Activated T-helper 1 cell treated with anti-CD3 and anti-CD28 coated beads, Interleukin-12 subunit alpha, Interleukin-12 subunit beta, Interleukin-2, Interleukin-4 antibody, amounts not matched to agents 30 ng/mL and 10 ng/mL and 1 ng/mL, durations not matched to agents 14 hours and 24 hours and 36 hours (primary cell): ENCODE measurements at regions of chr2 and their contacts with region 1.

Region 1: DNA sequence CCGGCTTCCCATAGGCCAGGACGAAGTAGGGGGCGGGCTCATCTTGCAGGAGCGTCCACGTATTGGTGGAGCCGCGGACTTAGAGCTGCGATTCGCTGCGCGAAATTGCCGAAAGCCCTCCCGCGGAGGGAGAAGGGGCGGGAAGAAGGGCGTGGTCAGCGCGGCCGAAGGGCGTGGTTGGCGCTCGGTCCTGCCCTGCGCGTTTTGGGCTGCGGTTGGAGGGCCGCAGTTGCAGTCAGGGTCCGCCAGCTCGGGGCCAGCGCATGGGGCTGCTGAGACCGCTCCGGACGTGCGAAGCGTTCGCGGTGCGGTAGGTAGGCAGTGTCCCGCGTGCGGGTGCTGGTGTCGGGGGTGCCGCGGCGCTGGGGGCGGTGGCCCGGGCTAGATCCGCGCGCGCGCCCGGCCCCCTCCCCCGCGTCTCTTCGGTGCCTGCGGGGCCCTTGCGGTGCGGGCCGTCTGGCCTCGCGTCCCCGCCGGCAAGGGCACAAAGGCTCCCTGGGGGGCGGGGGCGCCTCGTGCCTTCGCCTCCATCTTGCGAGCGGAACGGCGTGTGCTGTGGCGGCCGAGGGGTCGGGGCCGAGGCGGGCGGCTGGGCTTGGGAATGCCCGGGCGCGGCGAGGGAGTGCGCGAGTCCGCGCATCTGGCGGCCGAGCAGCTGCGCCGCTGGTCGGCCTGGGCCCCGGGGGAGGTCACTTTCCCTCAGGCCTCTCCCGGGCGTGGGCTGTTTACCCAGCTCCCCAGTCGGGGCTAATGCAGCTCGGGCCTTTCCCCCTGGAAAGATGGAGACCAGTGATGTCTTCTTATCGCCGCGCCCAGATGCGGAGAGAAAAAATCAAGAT is at the start of gene CEP68:
- DNase-seq: peak; percentile 96
- H3K4me3 Mint-ChIP-seq: peak within 1 kb of the TSS; percentile 94
- H3K27ac Mint-ChIP-seq: peak within 1 kb of the TSS; percentile 84
- H3K4me1 Mint-ChIP-seq: peaks cover 48% of the 10 kb centered on the region
- H3K27me3 Mint-ChIP-seq: peaks cover 6% of the 10 kb centered on the region
- total RNA-seq, gene CEP68: 4.0 and 5.5 TPM in 2 replicates

Region 2: GRCh38 chr2:63841254-63842022 is 1215.0 kb before region 1 on chr2 and contains the start of gene UGP2:
- intact Hi-C with region 1: loop called (anchors 2 kb)
- DNase-seq: peak; percentile 83
- H3K4me3 Mint-ChIP-seq: peak within 1 kb of the TSS; percentile 99
- H3K27ac Mint-ChIP-seq: peak within 1 kb of the TSS; percentile 99
- H3K4me1 Mint-ChIP-seq: peaks cover 47% of the 10 kb centered on the region
- H3K27me3 Mint-ChIP-seq: no peaks in the 10 kb centered on the region
- total RNA-seq, gene UGP2: 60.3 and 65.9 TPM in 2 replicates

Region 3: GRCh38 chr2:64609227-64609941 is 447.1 kb before region 1 on chr2:
- intact Hi-C with region 1: loop called (anchors 1 kb)
- DNase-seq: peak; percentile 67
- H3K4me3 Mint-ChIP-seq: peak overlapping the region; percentile 68
- H3K27ac Mint-ChIP-seq: peak overlapping the region; percentile 29
- H3K4me1 Mint-ChIP-seq: peaks cover 28% of the 10 kb centered on the region
- H3K27me3 Mint-ChIP-seq: peaks cover 11% of the 10 kb centered on the region

Region 4: DNA sequence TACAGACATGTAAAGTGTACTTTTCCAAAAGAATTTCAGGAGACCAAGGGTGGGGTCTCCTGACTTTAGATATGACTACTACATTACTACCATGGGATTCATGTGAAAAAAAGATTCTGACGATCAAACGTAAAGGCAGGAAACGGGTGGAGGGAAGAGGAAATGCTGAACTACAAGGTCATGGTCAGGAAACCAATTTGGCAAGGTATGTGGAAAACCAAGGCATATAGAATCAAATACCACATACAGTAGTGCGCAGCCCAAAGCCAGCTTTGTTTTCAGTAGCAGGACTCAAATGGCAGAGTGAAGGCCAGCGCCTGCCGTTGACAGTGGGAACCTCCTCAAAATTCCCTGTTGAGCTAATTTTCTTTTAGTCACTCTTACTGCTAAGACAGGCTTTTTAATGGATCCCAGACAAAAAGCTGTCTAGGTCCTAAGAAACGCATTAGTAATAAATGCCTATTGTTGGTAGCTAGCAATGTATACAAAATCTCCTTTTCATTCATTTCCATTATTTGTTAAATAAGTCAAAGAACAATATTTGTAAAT is 345.1 kb before region 1 on chr2:
- intact Hi-C with region 1: no loop called
- DNase-seq: no peak
- H3K4me3 Mint-ChIP-seq: peak overlapping the region; percentile 19
- H3K27ac Mint-ChIP-seq: no peak overlapping the region
- H3K4me1 Mint-ChIP-seq: peaks cover 23% of the 10 kb centered on the region
- H3K27me3 Mint-ChIP-seq: no peaks in the 10 kb centered on the region

Region 5: GRCh38 chr2:64914735-64915509 is 141.5 kb before region 1 on chr2:
- intact Hi-C with region 1: loop called (anchors 1 kb)
- DNase-seq: no peak
- H3K4me3 Mint-ChIP-seq: no peak overlapping the region
- H3K27ac Mint-ChIP-seq: no peak overlapping the region
- H3K4me1 Mint-ChIP-seq: peaks cover 42% of the 10 kb centered on the region
- H3K27me3 Mint-ChIP-seq: peaks cover 1% of the 10 kb centered on the region

Region 6: GRCh38 chr2:65040400-65041261 is 15.8 kb before region 1 on chr2:
- intact Hi-C with region 1: loop called (anchors 1 kb)
- DNase-seq: peak; percentile 67
- H3K4me3 Mint-ChIP-seq: no peak overlapping the region
- H3K27ac Mint-ChIP-seq: no peak overlapping the region
- H3K4me1 Mint-ChIP-seq: peaks cover 25% of the 10 kb centered on the region
- H3K27me3 Mint-ChIP-seq: no peaks in the 10 kb centered on the region

Region 7: DNA sequence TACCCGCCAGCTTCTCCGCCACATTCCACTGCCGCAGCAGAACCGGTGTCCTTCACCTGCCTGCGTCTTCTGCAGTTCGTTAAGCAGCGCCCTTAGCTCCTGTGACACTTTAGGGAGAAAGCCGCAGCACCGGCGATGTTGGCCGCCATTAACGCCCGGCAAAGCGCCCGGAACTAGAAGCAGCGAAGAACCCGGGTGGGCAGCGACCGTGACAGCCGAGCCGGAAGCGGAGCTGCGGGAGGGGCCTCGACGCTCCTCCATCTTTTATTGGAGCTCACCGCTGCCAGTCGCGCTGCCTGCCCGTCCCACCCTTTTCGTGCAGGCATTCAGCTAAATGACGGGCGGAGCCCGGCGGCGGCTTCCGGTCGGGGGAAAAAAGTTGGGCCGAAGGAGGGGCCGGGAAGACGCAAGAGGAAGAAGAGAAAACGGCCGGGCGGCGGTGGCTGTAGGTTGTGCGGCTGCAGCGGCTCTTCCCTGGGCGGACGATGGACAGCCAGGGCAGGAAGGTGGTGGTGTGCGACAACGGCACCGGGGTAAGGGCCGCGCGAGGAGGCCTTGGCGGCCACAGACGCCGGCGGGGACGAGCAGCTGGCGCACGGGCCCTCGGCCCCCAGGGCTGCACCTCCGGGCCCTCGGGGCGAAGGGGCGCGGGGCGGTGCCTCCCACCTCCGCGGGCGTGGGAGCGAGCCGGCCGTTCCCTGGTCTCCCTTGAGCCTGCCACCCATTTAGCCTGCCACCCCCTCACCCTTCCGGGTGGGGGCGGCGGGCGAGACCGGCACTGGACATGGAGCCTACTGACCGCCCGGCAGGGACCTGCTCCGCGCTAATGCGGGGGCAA is 171.2 kb after region 1 on chr2 and contains the start of gene ACTR2:
- intact Hi-C with region 1: loop called (anchors 1 kb)
- DNase-seq: peak; percentile 95
- H3K4me3 Mint-ChIP-seq: peak within 1 kb of the TSS; percentile 98
- H3K27ac Mint-ChIP-seq: peak within 1 kb of the TSS; percentile 99
- H3K4me1 Mint-ChIP-seq: peaks cover 36% of the 10 kb centered on the region
- H3K27me3 Mint-ChIP-seq: no peaks in the 10 kb centered on the region
- total RNA-seq, gene ACTR2: 285 and 295 TPM in 2 replicates

Region 8: GRCh38 chr2:65554765-65555591 is 498.5 kb after region 1 on chr2:
- intact Hi-C with region 1: loop called (anchors 5 kb)
- DNase-seq: no peak
- H3K4me3 Mint-ChIP-seq: peak overlapping the region; percentile 6
- H3K27ac Mint-ChIP-seq: peak overlapping the region; percentile 38
- H3K4me1 Mint-ChIP-seq: peaks cover 16% of the 10 kb centered on the region
- H3K27me3 Mint-ChIP-seq: peaks cover 30% of the 10 kb centered on the region

Region 9: GRCh38 chr2:66803726-66804125 is 1747.3 kb after region 1 on chr2:
- intact Hi-C with region 1: no loop called
- DNase-seq: no peak
- H3K4me3 Mint-ChIP-seq: no peak overlapping the region
- H3K27ac Mint-ChIP-seq: no peak overlapping the region
- H3K4me1 Mint-ChIP-seq: no peaks in the 10 kb centered on the region
- H3K27me3 Mint-ChIP-seq: no peaks in the 10 kb centered on the region